Activated CD4-positive, alpha-beta memory T cell treated with anti-CD3 and anti-CD28 coated beads for 36 hours (primary cell): ENCODE measurements at regions of chr22 and their contacts with region 1.

Region 1: DNA sequence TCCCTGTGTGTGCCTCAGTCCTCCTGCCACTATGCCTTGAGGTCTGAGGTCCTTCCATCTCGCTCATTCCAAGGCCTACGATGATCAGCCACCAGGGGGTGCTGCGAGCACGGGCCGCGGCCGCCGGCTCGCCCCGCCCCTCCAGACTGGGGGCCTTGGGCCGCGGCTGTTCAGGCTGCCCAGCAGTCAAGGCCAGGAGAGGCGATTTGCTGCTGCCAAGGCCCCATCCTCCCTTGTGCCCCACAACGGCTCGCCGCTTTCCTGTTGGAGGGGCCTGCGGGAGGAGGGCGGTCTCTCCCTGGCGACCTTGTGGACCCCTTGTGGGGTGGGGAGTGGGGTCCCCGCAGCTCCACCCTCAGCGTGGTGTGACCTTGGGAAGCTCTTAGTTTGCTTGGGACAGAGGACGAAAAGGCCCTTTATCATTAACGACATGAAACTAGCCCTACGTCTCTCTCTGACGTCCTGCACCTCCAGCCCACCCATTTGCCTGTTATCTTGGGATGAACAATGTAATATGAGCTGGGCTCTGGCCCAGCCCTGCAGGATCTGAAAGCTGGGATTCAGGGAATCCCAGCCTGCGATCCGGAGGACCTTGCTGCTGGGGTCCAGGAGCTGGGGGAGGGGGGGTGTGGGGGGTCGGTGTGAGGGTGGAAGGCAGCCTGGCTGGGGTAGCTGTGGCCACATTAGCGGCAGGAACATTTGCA is 5.3 kb upstream of the GALR3 start:
- DNase-seq: peak; percentile 87
- H3K4me3 Mint-ChIP-seq: no peak overlapping the region
- H3K27ac Mint-ChIP-seq: no peak overlapping the region
- H3K4me1 Mint-ChIP-seq: peaks cover 11% of the 10 kb centered on the region
- H3K27me3 Mint-ChIP-seq: peaks cover 7% of the 10 kb centered on the region

Region 2: DNA sequence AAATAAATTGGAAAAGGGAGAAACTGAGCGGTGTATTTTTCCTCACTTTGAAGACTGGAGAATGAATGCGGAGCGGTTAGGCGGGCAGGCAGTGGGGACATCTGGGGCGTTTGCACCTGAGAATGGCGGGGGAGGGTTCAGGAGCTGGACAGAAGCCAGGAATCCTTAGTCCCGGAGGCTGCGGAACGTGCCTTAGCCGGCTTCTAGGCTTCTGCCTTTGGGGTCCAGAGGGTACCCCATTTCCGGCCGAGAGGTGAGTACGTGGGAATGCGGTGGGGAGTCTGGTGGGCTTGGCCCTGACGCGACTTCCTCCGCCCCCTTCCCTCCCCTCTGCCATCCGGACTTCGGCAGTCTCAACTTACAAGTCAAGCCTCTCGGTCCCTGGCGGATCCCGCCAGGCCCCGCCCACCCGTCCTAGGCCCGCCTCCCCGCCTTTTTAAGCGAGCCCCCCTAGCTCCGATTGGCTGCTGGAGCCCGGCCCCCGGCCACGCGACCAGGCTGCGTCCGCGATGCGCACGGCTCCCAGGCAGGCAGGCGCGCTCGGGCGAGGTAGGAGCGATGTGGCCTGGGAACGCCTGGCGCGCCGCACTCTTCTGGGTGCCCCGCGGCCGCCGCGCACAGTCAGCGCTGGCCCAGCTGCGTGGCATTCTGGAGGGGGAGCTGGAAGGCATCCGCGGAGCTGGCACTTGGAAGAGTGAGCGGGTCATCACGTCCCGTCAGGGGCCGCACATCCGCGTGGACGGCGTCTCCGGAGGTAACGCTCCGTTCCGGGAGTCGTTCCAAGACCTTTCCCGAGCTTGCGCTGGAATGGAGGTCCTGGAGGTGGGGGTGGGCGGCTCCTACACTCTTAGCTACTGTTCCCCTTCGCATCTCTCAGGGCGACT is 10.2 kb before region 1 on chr22 and contains the start of gene GCAT:
- CTCF ChIA-PET with region 1: interaction called, 52 read pairs
- POLR2A ChIA-PET with region 1: interaction called, 5 read pairs
- intact Hi-C with region 1: loop called (anchors 2 kb)
- DNase-seq: peak; percentile 96
- H3K4me3 Mint-ChIP-seq: peak within 1 kb of the TSS; percentile 77
- H3K27ac Mint-ChIP-seq: no peak within 1 kb of the TSS
- H3K4me1 Mint-ChIP-seq: peaks cover 33% of the 10 kb centered on the region
- H3K27me3 Mint-ChIP-seq: peaks cover 46% of the 10 kb centered on the region
- total RNA-seq, gene GCAT: 21.8 TPM

Region 3: DNA sequence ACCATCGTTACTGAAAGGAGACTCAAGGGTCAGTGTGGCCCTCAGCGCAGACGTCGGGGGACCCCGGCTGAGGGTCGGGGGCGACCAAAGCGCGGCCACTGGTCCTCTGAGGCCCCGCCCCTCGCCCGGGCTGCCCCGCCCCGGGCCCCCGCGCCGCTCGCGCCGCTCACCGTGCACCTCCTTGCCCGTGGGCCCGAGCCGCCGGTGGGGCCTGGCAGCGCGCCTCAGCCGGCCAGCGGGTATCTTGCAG is 25.8 kb after region 1 on chr22:
- CTCF ChIA-PET with region 1: interaction called, 25 read pairs
- POLR2A ChIA-PET with region 1: interaction called, 6 read pairs
- intact Hi-C with region 1: no loop called
- DNase-seq: peak; percentile 60
- H3K4me3 Mint-ChIP-seq: peak overlapping the region; percentile 84
- H3K27ac Mint-ChIP-seq: peak overlapping the region; percentile 87
- H3K4me1 Mint-ChIP-seq: peaks cover 26% of the 10 kb centered on the region
- H3K27me3 Mint-ChIP-seq: no peaks in the 10 kb centered on the region

Region 4: DNA sequence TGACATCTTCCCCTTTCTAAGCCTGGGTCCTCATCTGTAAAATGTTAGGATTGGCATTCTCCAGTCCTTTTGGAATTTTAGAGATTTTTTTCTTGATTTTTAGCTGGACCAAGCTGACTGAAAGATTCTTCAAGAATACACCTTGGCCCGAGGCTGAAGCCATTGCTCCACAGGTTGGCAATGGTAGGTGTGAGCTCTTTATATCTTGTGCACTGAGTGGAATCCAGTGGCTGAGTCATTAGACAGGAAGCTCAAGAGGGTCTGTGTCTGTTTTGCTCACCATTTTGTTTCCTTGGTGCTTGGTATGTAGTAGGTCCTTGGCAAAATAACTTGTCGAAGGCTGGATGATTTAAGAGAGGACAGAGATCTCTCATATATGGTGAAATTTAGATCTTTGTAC is 37.6 kb after region 1 on chr22:
- CTCF ChIA-PET with region 1: interaction called, 11 read pairs
- POLR2A ChIA-PET with region 1: no interaction called
- intact Hi-C with region 1: no loop called
- DNase-seq: no peak
- H3K4me3 Mint-ChIP-seq: no peak overlapping the region
- H3K27ac Mint-ChIP-seq: no peak overlapping the region
- H3K4me1 Mint-ChIP-seq: peaks cover 26% of the 10 kb centered on the region
- H3K27me3 Mint-ChIP-seq: no peaks in the 10 kb centered on the region

Region 5: GRCh38 chr22:37933711-37934376 is 116.0 kb after region 1 on chr22:
- CTCF ChIA-PET with region 1: interaction called, 58 read pairs
- POLR2A ChIA-PET with region 1: no interaction called
- intact Hi-C with region 1: loop called (anchors 1 kb)
- DNase-seq: peak; percentile 93
- H3K4me3 Mint-ChIP-seq: no peak overlapping the region
- H3K27ac Mint-ChIP-seq: no peak overlapping the region
- H3K4me1 Mint-ChIP-seq: peaks cover 8% of the 10 kb centered on the region
- H3K27me3 Mint-ChIP-seq: no peaks in the 10 kb centered on the region

Region 6: DNA sequence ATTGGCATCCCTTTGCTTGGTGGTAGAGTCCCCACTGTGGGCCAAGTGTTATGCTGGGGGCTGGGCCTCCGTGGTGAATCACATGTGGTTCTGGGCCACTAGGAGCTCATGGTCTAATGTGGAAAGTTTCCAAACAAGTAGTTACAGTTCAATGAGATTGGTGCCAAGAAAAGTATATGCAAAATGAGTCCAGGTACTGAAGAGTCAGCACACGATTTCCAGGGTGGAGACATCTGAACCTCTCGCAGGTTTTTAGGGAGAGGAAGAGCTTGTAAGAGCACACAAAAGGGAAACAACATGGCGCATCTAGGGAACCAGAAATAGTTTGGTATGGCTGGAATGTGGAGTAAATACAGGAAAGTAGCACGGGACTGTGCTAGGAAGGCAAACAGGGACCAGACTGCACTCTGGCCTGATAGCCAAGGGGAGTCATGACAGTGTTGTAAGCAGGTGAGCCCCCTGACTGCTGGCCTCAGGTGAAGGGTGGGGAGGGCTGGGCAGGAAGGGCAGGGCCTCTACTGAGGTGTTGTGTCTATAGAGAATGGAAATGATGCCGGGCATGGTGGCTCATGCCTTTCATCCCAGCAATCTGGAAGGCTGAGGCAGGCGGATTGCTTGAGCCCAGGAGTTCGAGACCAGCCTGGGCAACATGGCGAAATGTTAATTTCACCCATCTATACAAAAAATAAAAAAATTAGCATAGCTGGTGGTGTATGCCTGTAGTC is 148.2 kb after region 1 on chr22:
- CTCF ChIA-PET with region 1: interaction called, 22 read pairs
- POLR2A ChIA-PET with region 1: no interaction called
- intact Hi-C with region 1: loop called (anchors 1 kb)
- DNase-seq: no peak
- H3K4me3 Mint-ChIP-seq: no peak overlapping the region
- H3K27ac Mint-ChIP-seq: no peak overlapping the region
- H3K4me1 Mint-ChIP-seq: no peaks in the 10 kb centered on the region
- H3K27me3 Mint-ChIP-seq: no peaks in the 10 kb centered on the region